ENCODE measurements at regions of chr10 and their contacts with region 1.

Region 1: DNA sequence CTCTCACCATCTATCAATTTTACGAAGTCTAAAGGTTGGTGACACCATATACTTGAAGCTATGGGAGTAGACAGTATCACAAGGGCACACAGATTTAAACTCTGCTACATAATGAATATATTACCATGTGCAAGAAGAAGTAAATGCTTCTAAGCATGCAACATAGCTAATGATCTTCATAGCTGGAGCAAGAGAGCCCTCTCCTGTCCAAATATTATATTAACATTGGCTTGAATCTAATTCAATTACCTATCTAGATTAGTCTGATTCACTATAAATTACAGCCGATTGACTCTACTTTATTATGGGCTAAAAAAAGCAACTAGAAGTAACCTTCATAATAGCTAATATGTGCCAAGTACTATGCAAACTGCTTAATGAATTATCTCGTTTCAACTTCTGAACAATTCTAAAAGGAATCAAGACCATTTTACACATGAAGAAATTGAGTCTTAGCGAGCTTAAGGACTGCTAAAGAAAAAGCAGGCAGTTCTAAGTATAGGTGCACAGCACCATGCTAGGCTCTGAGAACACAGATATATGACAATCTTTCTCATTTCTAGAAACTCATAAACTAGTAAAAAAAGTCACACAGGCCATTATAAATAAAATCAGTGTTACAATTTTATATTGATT is 21.9 kb downstream of the FRA10AC1 start:
- DNase-seq: no peak
- ATAC-seq: peak; percentile 50
- H3K4me3 ChIP-seq: no peak overlapping the region
- H3K27ac ChIP-seq: no peak overlapping the region
- H3K4me1 ChIP-seq: no peaks in the 10 kb centered on the region
- H3K27me3 ChIP-seq: no peaks in the 10 kb centered on the region
- CTCF ChIP-seq: peak in 2 of 3 experiments; percentile 17 to 53; a peak in 2 of 6 replicates
- EP300 ChIP-seq: no peak
- POLR2A ChIP-seq: no peak
- RAD21 ChIP-seq: peak; percentile 52

Region 2: GRCh38 chr10:93471110-93471651 is 209.3 kb before region 1 on chr10:
- CTCF ChIA-PET with region 1: no interaction called
- POLR2A ChIA-PET with region 1: no interaction called
- RAD21 ChIA-PET with region 1: no interaction called
- SMC1A ChIA-PET with region 1: no interaction called
- in situ Hi-C with region 1: no loop called
- intact Hi-C with region 1: no loop called
- DNase-seq: no peak
- ATAC-seq: no peak
- H3K4me3 ChIP-seq: no peak overlapping the region
- H3K27ac ChIP-seq: no peak overlapping the region
- H3K4me1 ChIP-seq: no peaks in the 10 kb centered on the region
- H3K27me3 ChIP-seq: no peaks in the 10 kb centered on the region
- CTCF ChIP-seq: no peak
- EP300 ChIP-seq: no peak
- POLR2A ChIP-seq: no peak
- RAD21 ChIP-seq: no peak

Region 3: GRCh38 chr10:93554760-93555432 is 125.6 kb before region 1 on chr10:
- CTCF ChIA-PET with region 1: interaction called, 60 read pairs
- POLR2A ChIA-PET with region 1: no interaction called
- RAD21 ChIA-PET with region 1: interaction called, 12 read pairs
- SMC1A ChIA-PET with region 1: interaction called, 16 read pairs
- in situ Hi-C with region 1: no loop called
- intact Hi-C with region 1: loop called (anchors 1 kb)
- DNase-seq: no peak
- ATAC-seq: peak; percentile 99
- H3K4me3 ChIP-seq: no peak overlapping the region
- H3K27ac ChIP-seq: no peak overlapping the region
- H3K4me1 ChIP-seq: no peaks in the 10 kb centered on the region
- H3K27me3 ChIP-seq: no peaks in the 10 kb centered on the region
- CTCF ChIP-seq: peak; percentile 77 to 83 (median 82)
- EP300 ChIP-seq: no peak
- POLR2A ChIP-seq: no peak
- RAD21 ChIP-seq: peak; percentile 57

Region 4: DNA sequence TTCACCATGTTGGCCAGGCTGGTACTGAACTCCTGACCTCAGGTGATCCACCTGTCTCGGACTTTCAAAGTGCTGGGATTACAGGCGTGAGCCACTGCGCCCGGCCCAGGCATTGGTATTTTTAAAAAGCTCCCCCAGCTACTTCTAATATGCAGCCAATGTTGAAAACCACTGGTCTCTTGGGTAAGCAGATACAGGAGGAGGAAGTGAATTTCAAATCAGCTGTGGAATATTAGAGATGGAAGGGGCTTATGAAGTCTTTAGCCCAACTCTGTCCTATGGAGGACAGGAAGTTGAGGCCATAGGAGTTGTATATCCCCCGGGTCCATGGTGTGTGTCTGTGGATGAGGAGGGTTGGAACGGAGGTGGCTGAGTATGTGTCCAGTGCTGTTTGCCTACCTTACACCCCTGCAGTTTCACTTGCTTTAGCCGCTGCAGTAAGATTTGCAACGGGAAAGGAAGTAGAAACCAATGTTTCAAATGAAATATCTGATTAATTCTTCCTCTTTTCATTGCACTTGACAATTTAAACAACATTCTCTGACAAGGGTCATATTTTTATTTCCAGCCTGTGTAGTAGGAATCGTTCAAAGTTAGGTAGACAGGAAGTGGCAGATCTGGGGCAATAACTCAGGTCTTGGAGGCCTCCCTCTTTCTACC is 64.8 kb before region 1 on chr10:
- CTCF ChIA-PET with region 1: no interaction called
- POLR2A ChIA-PET with region 1: no interaction called
- RAD21 ChIA-PET with region 1: no interaction called
- SMC1A ChIA-PET with region 1: no interaction called
- in situ Hi-C with region 1: no loop called
- intact Hi-C with region 1: no loop called
- DNase-seq: no peak
- ATAC-seq: no peak
- H3K4me3 ChIP-seq: no peak overlapping the region
- H3K27ac ChIP-seq: no peak overlapping the region
- H3K4me1 ChIP-seq: peaks cover 4% of the 10 kb centered on the region
- H3K27me3 ChIP-seq: no peaks in the 10 kb centered on the region; a peak in 1 of 4 replicates
- CTCF ChIP-seq: no peak
- EP300 ChIP-seq: no peak
- POLR2A ChIP-seq: no peak
- RAD21 ChIP-seq: no peak

Region 5: DNA sequence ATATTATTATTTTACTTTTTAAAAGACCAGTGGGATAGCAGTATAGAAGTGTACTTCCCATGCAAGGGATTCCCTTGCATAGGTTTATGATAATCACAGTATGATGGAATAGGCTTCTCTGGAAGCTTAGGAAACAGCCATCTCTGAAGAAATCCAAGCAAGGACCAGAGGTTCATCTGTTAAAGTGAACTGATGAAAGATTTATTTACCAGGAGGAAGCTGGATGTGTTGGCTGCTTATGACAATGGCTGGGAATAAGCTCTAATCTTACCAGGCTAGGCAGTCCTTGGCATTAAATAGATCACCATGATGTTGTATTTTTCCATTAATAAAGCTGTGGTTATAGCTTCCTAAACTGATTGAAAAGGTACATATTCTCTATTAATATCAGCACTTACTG is 10.2 kb before region 1 on chr10:
- CTCF ChIA-PET with region 1: interaction called, 14 read pairs
- POLR2A ChIA-PET with region 1: interaction called, 5 read pairs
- RAD21 ChIA-PET with region 1: no interaction called
- SMC1A ChIA-PET with region 1: interaction called, 5 read pairs
- in situ Hi-C with region 1: no loop called
- intact Hi-C with region 1: no loop called
- DNase-seq: no peak
- ATAC-seq: no peak
- H3K4me3 ChIP-seq: no peak overlapping the region
- H3K27ac ChIP-seq: no peak overlapping the region
- H3K4me1 ChIP-seq: no peaks in the 10 kb centered on the region
- H3K27me3 ChIP-seq: no peaks in the 10 kb centered on the region
- CTCF ChIP-seq: no peak
- EP300 ChIP-seq: no peak
- POLR2A ChIP-seq: no peak
- RAD21 ChIP-seq: no peak